AG04449 (cell line): ENCODE measurements at regions of chr17 and their contacts with region 1.

Region 1: GRCh38 chr17:50161023-50161910 is 4.5 kb upstream of the SGCA start:
- DNase-seq: no peak
- H3K4me3 ChIP-seq: peak overlapping the region; percentile 75
- CTCF ChIP-seq: peak; percentile 97

Region 2: DNA sequence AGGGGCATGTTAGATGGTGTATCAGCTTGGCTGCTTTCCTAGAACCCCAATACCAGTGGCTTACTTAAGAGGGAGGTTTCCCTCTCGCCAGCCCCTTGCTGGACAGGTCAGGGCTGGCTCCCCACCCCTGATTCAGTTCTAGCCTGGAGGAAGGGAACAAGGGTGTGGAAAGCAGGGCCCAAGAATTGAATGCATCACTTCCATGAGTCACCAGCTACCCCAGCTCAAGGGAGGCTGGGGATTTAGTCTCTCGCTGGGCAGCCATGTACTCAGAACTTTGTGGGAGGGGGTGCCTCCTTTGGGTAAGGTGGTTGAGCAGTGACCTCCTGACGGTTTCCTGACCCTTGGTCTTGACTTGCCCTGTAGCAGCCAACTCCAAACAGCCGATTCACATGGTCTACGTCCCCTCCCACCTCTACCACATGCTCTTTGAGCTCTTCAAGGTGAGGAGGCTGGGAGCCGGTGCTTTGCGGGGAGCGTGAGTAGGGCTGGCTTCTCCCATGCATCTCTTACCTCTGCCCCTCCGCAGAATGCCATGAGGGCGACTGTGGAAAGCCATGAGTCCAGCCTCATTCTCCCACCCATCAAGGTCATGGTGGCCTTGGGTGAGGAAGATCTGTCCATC is 53.4 kb before region 1 on chr17:
- CTCF ChIA-PET with region 1: interaction called, 10 read pairs
- POLR2A ChIA-PET with region 1: no interaction called
- DNase-seq: peak; percentile 14
- H3K4me3 ChIP-seq: no peak overlapping the region
- CTCF ChIP-seq: no peak

Region 3: DNA sequence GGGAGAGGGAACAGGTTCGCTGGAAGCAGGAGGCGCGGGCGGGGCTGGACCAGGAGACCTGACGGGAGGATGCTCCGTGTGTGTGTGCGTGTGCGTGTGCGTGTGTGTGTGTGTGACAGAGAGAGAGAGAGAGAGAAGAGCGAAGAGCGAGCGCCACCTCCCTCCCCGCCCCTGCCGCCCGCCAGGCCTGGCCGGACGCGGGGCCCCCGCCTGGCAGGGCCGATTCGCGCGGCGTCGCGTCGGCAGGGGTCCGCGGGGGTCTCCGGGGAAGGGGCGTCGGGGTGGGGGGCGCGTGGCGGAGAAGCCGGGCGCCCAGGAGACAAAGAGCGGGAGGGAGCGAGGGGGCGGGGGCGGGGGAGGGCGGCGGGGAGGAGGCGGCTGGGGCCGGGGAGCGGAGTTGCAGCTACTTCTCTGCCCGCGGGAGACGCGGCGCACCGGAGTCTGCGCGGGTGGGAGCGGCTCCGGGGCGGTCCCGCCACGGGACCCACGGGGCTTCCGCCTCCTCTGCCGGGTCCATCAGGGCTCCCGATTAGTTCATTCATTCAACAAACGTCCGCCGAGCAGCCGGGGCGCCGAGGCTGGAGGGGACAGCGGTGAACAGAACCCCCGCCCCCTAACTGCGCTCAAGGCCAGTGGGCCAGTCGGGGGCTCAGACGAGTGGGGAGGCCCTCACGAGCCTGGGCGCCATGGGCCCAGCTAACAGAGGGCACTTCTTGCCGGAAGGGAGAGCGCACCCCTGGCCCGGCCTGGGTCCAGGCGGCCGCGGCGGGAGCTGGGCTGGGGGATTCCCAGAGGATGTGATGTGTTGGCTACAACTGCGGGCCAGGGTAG is 31.3 kb before region 1 on chr17 and contains the start of gene SAMD14:
- CTCF ChIA-PET with region 1: interaction called, 143 read pairs
- POLR2A ChIA-PET with region 1: no interaction called
- DNase-seq: no peak
- H3K4me3 ChIP-seq: peak within 1 kb of the TSS; percentile 67
- CTCF ChIP-seq: no peak

Region 4: DNA sequence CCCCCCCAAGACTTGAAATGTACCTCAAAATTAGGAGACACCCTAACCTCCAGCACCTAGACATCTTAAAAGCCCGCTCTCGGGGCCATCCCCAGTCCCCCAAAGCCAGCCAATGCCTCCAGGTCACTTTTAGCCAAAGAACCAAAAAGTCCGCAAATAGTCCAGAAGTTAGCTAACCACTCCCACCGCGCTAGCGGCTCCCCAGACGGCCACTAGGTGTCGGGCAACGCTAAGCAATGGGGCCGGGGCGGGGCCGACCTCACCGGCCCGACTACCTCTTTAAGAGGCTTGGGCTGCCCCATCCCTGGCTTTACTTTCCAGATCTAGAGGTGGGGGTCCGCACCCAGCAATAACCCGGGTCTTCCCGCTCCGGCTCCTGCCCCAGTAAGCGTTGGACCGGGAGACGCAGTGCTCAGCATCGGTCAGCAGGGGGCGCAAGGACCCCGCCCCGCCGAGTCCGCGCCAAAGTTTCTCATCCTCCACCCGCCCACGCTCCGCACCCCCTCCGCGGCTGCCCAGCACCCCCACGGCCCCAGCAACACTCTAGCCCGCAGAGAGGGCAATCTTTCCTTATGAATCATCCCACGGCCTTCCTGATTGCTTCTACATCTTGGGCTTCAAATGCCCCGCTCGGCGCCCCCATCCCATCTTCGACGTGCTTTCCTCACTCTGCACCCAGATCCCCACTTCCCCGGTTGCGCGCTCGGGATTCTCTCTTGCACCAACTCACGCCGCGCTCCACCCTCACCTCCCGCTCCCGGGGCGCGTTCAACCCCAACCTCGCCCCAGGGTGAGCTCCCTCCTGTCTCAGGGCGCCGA is 39.4 kb after region 1 on chr17:
- CTCF ChIA-PET with region 1: interaction called, 12 read pairs
- POLR2A ChIA-PET with region 1: interaction called, 5 read pairs
- DNase-seq: no peak
- H3K4me3 ChIP-seq: peak overlapping the region; percentile 100
- CTCF ChIP-seq: peak; percentile 80

Region 5: GRCh38 chr17:50279181-50279526 is 117.9 kb after region 1 on chr17:
- CTCF ChIA-PET with region 1: interaction called, 410 read pairs
- POLR2A ChIA-PET with region 1: no interaction called
- DNase-seq: no peak
- H3K4me3 ChIP-seq: no peak overlapping the region
- CTCF ChIP-seq: no peak

Region 6: GRCh38 chr17:50304781-50305404 is 143.6 kb after region 1 on chr17:
- CTCF ChIA-PET with region 1: interaction called, 455 read pairs
- POLR2A ChIA-PET with region 1: no interaction called
- DNase-seq: no peak
- H3K4me3 ChIP-seq: no peak overlapping the region
- CTCF ChIP-seq: no peak